GM12878 (cell line): ENCODE measurements at regions of chr5 and their contacts with region 1.

Region 1: GRCh38 chr5:94740286-94740685 is 121.8 kb downstream of the SLF1 start:
- DNase-seq: no peak
- ATAC-seq: no peak
- H3K4me3 ChIP-seq: no peak overlapping the region
- H3K27ac ChIP-seq: no peak overlapping the region
- H3K4me1 ChIP-seq: peaks cover 9% of the 10 kb centered on the region
- H3K27me3 ChIP-seq: no peaks in the 10 kb centered on the region
- CTCF ChIP-seq: no peak
- EP300 ChIP-seq: no peak
- POLR2A ChIP-seq: no peak
- RAD21 ChIP-seq: no peak

Region 2: DNA sequence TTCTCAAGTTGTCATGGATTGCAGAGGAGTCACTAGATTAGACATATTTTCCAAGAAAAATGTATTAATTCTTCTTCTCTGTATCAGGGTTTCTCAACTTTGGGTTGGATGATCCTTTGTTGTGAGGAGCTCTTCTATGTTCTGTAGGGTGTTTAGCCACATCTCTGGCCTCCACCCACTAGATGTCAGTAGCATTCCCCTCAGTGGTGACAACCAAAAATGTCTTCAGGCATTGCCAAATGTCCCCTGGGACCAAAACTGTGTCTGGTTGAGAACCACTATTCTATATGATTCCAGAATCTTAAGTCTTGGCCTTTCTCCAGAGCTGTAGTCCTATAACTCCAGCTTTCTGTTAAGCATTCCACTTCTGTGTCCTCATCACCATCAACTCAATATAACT is 342.8 kb before region 1 on chr5:
- CTCF ChIA-PET with region 1: interaction called, 3 read pairs
- POLR2A ChIA-PET with region 1: no interaction called
- RAD21 ChIA-PET with region 1: no interaction called
- SMC1A ChIA-PET with region 1: no interaction called
- in situ Hi-C with region 1: no loop called
- intact Hi-C with region 1: loop called (anchors 5 kb)
- DNase-seq: no peak
- ATAC-seq: peak; percentile 56; the same call in 2 of the 3 replicates
- H3K4me3 ChIP-seq: no peak overlapping the region
- H3K27ac ChIP-seq: no peak overlapping the region
- H3K4me1 ChIP-seq: no peaks in the 10 kb centered on the region
- H3K27me3 ChIP-seq: no peaks in the 10 kb centered on the region
- CTCF ChIP-seq: peak in 1 of 3 experiments; percentile 13; a peak in 1 of 6 replicates
- EP300 ChIP-seq: no peak
- POLR2A ChIP-seq: no peak
- RAD21 ChIP-seq: no peak

Region 3: GRCh38 chr5:94693043-94693822 is 47.1 kb before region 1 on chr5:
- CTCF ChIA-PET with region 1: interaction called, 15 read pairs
- POLR2A ChIA-PET with region 1: no interaction called
- RAD21 ChIA-PET with region 1: interaction called, 8 read pairs
- SMC1A ChIA-PET with region 1: interaction called, 7 read pairs
- in situ Hi-C with region 1: no loop called
- intact Hi-C with region 1: no loop called
- DNase-seq: no peak
- ATAC-seq: peak; percentile 86
- H3K4me3 ChIP-seq: no peak overlapping the region
- H3K27ac ChIP-seq: no peak overlapping the region
- H3K4me1 ChIP-seq: no peaks in the 10 kb centered on the region
- H3K27me3 ChIP-seq: no peaks in the 10 kb centered on the region
- CTCF ChIP-seq: peak in 2 of 3 experiments; percentile 36 to 63; a peak in 3 of 6 replicates
- EP300 ChIP-seq: no peak
- POLR2A ChIP-seq: no peak
- RAD21 ChIP-seq: peak; percentile 62

Region 4: DNA sequence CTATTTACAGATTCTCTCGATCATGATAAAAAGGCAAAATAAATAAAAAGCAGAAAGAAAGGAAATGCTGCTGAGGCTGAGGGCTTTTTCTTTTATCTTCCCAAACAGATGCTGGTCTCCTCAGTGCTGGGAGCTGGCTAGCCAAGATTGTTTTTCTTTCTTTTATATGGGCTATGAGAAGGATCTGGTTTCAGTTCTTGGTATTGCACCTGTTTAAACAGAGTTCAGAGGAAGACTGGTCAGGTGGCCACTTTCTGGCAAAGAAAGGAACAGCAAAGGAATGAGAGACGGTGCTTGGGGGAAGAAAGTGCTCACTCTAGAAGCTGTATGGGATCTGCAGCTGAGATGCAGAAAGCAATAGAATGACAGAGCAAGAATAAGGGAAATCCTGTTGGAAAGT is 32.9 kb before region 1 on chr5:
- CTCF ChIA-PET with region 1: interaction called, 26 read pairs
- POLR2A ChIA-PET with region 1: interaction called, 6 read pairs
- RAD21 ChIA-PET with region 1: interaction called, 9 read pairs
- SMC1A ChIA-PET with region 1: interaction called, 14 read pairs
- in situ Hi-C with region 1: no loop called
- intact Hi-C with region 1: loop called (anchors 2 kb)
- DNase-seq: no peak
- ATAC-seq: no peak; the same call in 2 of the 3 replicates
- H3K4me3 ChIP-seq: no peak overlapping the region
- H3K27ac ChIP-seq: no peak overlapping the region
- H3K4me1 ChIP-seq: peaks cover 10% of the 10 kb centered on the region; the same call in 1 of the 2 replicates
- H3K27me3 ChIP-seq: no peaks in the 10 kb centered on the region
- CTCF ChIP-seq: no peak
- EP300 ChIP-seq: no peak
- POLR2A ChIP-seq: no peak
- RAD21 ChIP-seq: no peak

Region 5: DNA sequence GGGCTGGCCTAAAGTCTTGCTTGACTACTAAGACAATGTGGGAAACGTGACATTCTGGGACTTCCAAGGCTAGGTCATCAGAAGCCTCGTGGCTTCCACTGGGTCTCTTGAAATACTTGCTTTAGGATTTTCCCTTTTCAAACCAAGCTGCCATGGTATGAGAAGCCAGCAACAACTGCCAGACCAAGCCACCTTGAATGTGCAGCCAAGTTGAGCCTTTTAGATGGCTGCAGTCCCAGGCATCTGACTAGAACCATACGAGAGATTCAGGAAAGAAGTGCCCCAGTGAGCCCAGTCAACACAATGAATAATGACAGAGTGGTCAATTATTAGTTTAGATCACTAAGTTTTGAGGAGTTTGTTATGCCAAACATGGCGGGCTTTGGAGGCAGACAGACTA is 21.5 kb after region 1 on chr5:
- CTCF ChIA-PET with region 1: interaction called, 10 read pairs
- POLR2A ChIA-PET with region 1: interaction called, 4 read pairs
- RAD21 ChIA-PET with region 1: interaction called, 3 read pairs
- SMC1A ChIA-PET with region 1: interaction called, 5 read pairs
- in situ Hi-C with region 1: no loop called
- intact Hi-C with region 1: no loop called
- DNase-seq: no peak
- ATAC-seq: no peak
- H3K4me3 ChIP-seq: no peak overlapping the region
- H3K27ac ChIP-seq: no peak overlapping the region
- H3K4me1 ChIP-seq: no peaks in the 10 kb centered on the region
- H3K27me3 ChIP-seq: no peaks in the 10 kb centered on the region
- CTCF ChIP-seq: no peak
- EP300 ChIP-seq: no peak
- POLR2A ChIP-seq: no peak
- RAD21 ChIP-seq: no peak